ENCODE measurements at regions of chr10 and their contacts with region 1.

Region 1: GRCh38 chr10:62038609-62039190 is 137.2 kb downstream of the ARID5B start:
- DNase-seq: peak; percentile 81
- H3K4me3 Mint-ChIP-seq: peak overlapping the region; percentile 7
- H3K27ac Mint-ChIP-seq: peak overlapping the region; percentile 56
- H3K4me1 Mint-ChIP-seq: peaks cover 60% of the 10 kb centered on the region
- H3K27me3 Mint-ChIP-seq: no peaks in the 10 kb centered on the region
- CTCF ChIP-seq: peak; percentile 76

Region 2: GRCh38 chr10:61721431-61721830 is 317.3 kb before region 1 on chr10:
- CTCF ChIA-PET with region 1: no interaction called
- intact Hi-C with region 1: no loop called
- DNase-seq: no peak
- H3K4me3 Mint-ChIP-seq: no peak overlapping the region
- H3K27ac Mint-ChIP-seq: no peak overlapping the region
- H3K4me1 Mint-ChIP-seq: no peaks in the 10 kb centered on the region
- H3K27me3 Mint-ChIP-seq: no peaks in the 10 kb centered on the region
- CTCF ChIP-seq: no peak

Region 3: DNA sequence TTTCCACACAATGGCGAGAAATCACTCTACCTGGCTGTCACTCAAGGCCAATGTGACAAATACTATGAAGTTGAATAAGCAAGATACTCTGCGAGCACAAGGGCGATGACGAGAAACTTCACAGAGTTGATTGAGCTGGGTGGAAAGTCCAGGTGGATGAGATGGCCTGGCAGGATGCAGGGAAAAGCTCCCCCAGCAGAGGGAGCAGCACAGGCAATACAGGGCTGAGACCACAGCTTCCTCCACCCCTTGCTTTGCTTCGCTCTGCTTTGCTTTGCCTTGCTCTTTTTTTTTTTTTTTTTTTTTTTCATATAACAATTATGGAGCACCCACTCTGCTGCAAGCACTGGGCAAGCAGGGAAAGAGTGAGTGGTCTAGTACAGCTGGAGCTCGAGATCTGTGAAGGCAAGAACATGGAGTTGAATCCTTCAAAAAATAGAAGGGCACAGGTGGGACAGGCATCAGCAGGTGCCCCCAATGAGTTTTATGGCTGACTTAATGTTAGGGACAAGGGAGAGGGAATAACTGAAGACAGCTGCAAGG is 287.7 kb before region 1 on chr10:
- CTCF ChIA-PET with region 1: interaction called, 5 read pairs
- intact Hi-C with region 1: loop called (anchors 5 kb)
- DNase-seq: peak; percentile 90
- H3K4me3 Mint-ChIP-seq: peak overlapping the region; percentile 58
- H3K27ac Mint-ChIP-seq: peak overlapping the region; percentile 96
- H3K4me1 Mint-ChIP-seq: peaks cover 54% of the 10 kb centered on the region
- H3K27me3 Mint-ChIP-seq: no peaks in the 10 kb centered on the region
- CTCF ChIP-seq: peak; percentile 85

Region 4: GRCh38 chr10:61903221-61903927 is 135.3 kb before region 1 on chr10:
- CTCF ChIA-PET with region 1: interaction called, 15 read pairs
- intact Hi-C with region 1: loop called (anchors 1 kb)
- DNase-seq: peak; percentile 72
- H3K4me3 Mint-ChIP-seq: peak overlapping the region; percentile 79
- H3K27ac Mint-ChIP-seq: peak overlapping the region; percentile 77
- H3K4me1 Mint-ChIP-seq: peaks cover 29% of the 10 kb centered on the region
- H3K27me3 Mint-ChIP-seq: no peaks in the 10 kb centered on the region
- CTCF ChIP-seq: peak; percentile 60

Region 5: DNA sequence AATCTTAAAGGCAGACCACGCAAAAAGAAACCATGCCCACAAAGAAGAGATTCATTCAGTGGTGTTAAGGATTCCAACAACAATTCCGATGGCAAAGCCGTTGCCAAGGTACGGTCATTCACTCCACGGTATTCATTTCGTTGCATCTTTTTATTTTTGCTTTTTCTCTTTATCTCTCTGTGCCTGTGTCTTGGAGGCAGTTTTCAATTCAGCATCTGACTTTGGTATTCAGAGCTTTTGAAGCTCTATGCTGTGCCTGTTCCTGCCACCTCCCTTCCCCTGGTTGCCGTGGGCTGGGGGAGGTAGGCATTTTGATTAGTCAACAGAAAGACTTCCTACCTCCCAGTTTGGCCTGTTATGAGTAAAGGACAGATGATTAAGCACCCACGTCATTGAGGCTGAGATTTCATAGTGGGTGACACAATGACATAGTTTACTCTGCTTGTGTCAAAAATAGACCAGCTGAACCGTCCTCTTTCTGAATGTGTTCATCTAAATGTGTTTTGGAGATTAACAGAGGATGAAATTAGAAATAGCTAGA is 12.3 kb after region 1 on chr10:
- CTCF ChIA-PET with region 1: interaction called, 25 read pairs
- intact Hi-C with region 1: no loop called
- DNase-seq: peak; percentile 61
- H3K4me3 Mint-ChIP-seq: peak overlapping the region; percentile 14
- H3K27ac Mint-ChIP-seq: peak overlapping the region; percentile 16
- H3K4me1 Mint-ChIP-seq: peaks cover 66% of the 10 kb centered on the region
- H3K27me3 Mint-ChIP-seq: no peaks in the 10 kb centered on the region
- CTCF ChIP-seq: no peak

Region 6: DNA sequence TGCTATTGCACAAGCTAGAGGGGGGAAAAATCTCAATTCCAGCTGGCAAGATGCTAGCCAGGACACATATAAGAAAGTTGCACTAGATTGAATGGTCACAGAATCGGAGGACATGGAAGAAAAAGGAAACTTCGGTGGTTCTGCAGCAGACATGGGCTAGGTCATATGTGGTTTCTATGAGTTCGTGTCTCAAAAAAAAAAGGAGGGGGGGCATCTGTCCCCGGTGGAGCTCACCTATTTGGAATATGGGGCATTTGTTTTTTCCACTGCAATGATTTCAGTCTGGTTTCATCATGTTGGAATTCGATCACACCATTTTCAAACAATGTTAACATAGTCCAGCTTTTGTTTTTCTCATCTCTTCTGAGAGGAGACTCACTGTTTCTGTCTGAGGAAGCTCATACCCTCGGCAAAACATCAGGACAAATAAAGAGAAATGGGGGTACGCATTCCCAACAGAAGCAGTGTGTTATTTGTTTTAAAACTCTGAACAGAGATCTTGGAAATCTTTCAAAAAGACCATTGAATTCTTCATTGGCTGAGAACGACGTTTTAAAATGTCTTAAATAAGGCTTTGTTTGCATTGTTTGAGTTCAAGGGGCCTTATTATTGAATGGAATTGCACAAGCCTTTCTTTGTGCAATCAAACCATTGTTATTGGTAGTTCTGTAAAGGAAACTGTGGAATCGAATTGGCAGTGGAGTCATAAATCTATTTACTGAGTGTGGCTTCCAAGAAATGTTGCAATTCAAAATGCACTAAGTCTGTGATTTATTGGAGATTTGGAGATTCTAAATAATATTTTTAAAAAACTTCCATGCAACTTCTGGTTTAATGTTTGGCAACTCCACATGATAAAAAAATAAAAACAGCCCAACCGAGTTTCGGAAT is 56.7 kb after region 1 on chr10:
- CTCF ChIA-PET with region 1: interaction called, 12 read pairs
- intact Hi-C with region 1: loop called (anchors 2 kb)
- DNase-seq: peak; percentile 54
- H3K4me3 Mint-ChIP-seq: peak overlapping the region; percentile 67
- H3K27ac Mint-ChIP-seq: peak overlapping the region; percentile 100
- H3K4me1 Mint-ChIP-seq: peaks cover 64% of the 10 kb centered on the region
- H3K27me3 Mint-ChIP-seq: no peaks in the 10 kb centered on the region
- CTCF ChIP-seq: no peak

Region 7: DNA sequence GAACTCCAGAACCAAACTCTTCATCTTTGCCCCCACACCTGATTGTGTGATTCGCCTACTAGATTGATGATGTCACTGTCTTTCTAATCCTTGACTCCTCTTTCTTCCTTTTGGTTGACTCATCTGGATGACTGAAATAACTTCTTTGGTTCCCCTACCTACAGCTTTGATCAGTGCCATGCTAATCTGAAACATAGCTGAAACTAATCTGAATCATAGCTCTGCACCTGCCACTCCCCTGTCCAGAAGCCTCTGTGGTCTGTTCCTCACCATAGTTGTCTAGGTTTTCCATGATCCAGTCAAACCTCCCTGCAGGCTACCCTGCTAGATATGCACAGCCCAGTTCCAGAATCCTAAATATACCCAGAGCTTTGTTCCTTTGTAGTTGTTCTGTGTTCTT is 387.4 kb after region 1 on chr10:
- CTCF ChIA-PET with region 1: no interaction called
- intact Hi-C with region 1: loop called (anchors 5 kb)
- DNase-seq: peak; percentile 12
- H3K4me3 Mint-ChIP-seq: no peak overlapping the region
- H3K27ac Mint-ChIP-seq: no peak overlapping the region
- H3K4me1 Mint-ChIP-seq: peaks cover 23% of the 10 kb centered on the region
- H3K27me3 Mint-ChIP-seq: no peaks in the 10 kb centered on the region
- CTCF ChIP-seq: no peak

Region 8: GRCh38 chr10:62760401-62760800 is 721.7 kb after region 1 on chr10:
- CTCF ChIA-PET with region 1: no interaction called
- intact Hi-C with region 1: no loop called
- DNase-seq: no peak
- H3K4me3 Mint-ChIP-seq: no peak overlapping the region
- H3K27ac Mint-ChIP-seq: no peak overlapping the region
- H3K4me1 Mint-ChIP-seq: no peaks in the 10 kb centered on the region
- H3K27me3 Mint-ChIP-seq: peaks cover 11% of the 10 kb centered on the region
- CTCF ChIP-seq: no peak